ENCODE measurements at regions of chr4 and their contacts with region 1.

Region 1: GRCh38 chr4:8886612-8887406 is 15.2 kb upstream of the HMX1 start:
- DNase-seq: peak; percentile 5
- H3K4me3 Mint-ChIP-seq: no peak overlapping the region
- H3K27ac Mint-ChIP-seq: no peak overlapping the region
- H3K4me1 Mint-ChIP-seq: no peaks in the 10 kb centered on the region
- H3K27me3 Mint-ChIP-seq: no peaks in the 10 kb centered on the region
- CTCF ChIP-seq: peak; percentile 37

Region 2: DNA sequence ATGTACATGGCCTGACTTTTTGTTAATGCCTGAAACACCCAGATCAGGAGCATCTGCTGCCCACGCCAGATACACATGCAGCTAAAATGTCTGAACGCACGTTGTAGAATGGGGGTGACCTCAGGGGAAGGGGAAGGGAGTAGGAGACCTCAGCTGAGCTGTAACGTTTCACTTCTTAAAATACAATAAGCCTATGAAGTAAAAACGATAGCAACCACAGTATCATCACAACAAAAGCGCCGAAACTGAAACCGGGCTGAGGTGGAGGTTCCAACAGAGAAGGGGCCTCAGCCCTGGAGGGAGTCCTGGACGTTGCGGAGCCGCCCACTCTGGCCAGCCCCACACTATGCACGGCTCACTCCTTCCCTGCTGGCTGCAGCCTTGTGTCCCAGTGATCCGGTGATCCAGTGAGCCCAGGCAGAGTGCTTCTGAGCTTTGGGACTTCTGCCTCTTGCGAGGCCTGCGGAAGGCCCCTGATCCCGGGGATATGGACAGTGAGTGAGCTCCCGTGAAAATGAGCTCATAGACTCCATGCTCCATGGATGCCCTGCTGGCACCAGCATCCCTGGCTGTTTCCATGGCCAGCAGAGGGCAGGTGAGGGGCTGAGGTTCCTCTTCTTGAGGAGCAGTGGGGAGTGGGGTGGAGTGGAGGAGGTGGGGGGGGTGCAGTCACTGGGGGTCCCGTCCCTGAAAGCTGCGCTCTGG is 67.2 kb before region 1 on chr4:
- CTCF ChIA-PET with region 1: no interaction called
- POLR2A ChIA-PET with region 1: no interaction called
- intact Hi-C with region 1: no loop called
- DNase-seq: no peak
- H3K4me3 Mint-ChIP-seq: no peak overlapping the region
- H3K27ac Mint-ChIP-seq: no peak overlapping the region
- H3K4me1 Mint-ChIP-seq: no peaks in the 10 kb centered on the region
- H3K27me3 Mint-ChIP-seq: no peaks in the 10 kb centered on the region
- CTCF ChIP-seq: no peak

Region 3: GRCh38 chr4:8897251-8898167 is 10.7 kb after region 1 on chr4:
- CTCF ChIA-PET with region 1: interaction called, 23 read pairs
- POLR2A ChIA-PET with region 1: interaction called, 3 read pairs
- intact Hi-C with region 1: no loop called
- DNase-seq: peak; percentile 68
- H3K4me3 Mint-ChIP-seq: no peak overlapping the region
- H3K27ac Mint-ChIP-seq: no peak overlapping the region
- H3K4me1 Mint-ChIP-seq: no peaks in the 10 kb centered on the region
- H3K27me3 Mint-ChIP-seq: no peaks in the 10 kb centered on the region
- CTCF ChIP-seq: no peak